Activated CD8-positive, alpha-beta T cell treated with anti-CD3 and anti-CD28 coated beads, Interleukin-2, amount 10 ng/mL, durations not matched to agents 7 days and 5 days (primary cell): ENCODE measurements at regions of chr20 and their contacts with region 1.

Region 1: GRCh38 chr20:62972270-62973032 is 19.9 kb downstream of the SLC17A9 start:
- DNase-seq: peak; percentile 90
- ATAC-seq: peak; percentile 97
- H3K4me3 Mint-ChIP-seq: peak overlapping the region; percentile 19
- H3K27ac Mint-ChIP-seq: no peak overlapping the region
- H3K4me1 Mint-ChIP-seq: peaks cover 12% of the 10 kb centered on the region
- H3K27me3 Mint-ChIP-seq: peaks cover 42% of the 10 kb centered on the region

Region 2: DNA sequence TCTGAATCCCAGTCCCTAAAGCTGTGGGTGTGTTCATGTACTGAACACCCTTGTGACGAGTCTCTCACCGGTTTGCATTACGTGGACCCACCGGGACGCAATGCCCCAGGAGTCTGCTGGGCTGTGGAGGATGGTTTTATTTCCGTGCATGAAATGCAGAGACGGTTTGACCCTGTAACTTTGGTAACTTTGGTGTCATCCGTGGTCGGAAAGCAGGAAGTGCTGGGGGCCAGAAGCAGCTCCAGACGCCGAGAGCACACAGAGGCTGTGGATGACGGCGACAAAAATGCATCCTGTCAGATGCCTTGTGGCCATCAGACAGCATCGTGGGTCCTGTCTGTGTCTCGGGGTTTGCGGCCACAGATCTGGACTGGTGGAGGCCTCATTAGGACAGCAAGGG is 27.1 kb after region 1 on chr20:
- CTCF ChIA-PET with region 1: interaction called, 30 read pairs
- POLR2A ChIA-PET with region 1: interaction called, 3 read pairs
- DNase-seq: peak; percentile 52
- ATAC-seq: peak; percentile 42
- H3K4me3 Mint-ChIP-seq: no peak overlapping the region
- H3K27ac Mint-ChIP-seq: no peak overlapping the region
- H3K4me1 Mint-ChIP-seq: peaks cover 15% of the 10 kb centered on the region
- H3K27me3 Mint-ChIP-seq: peaks cover 57% of the 10 kb centered on the region